ENCODE measurements at regions of chr9 and their contacts with region 1.

Region 1: GRCh38 chr9:136482793-136483588 is at the start of gene SEC16A:
- DNase-seq: peak; percentile 97
- ATAC-seq: peak; percentile 67
- H3K4me3 ChIP-seq: peak within 1 kb of the TSS; percentile 77 to 97
- H3K27ac ChIP-seq: peak within 1 kb of the TSS; percentile 100
- H3K4me1 ChIP-seq: peaks cover 10 to 29% of the 10 kb centered on the region in 2 experiments
- H3K27me3 ChIP-seq: no peaks in the 10 kb centered on the region
- CTCF ChIP-seq: no peak
- POLR2A ChIP-seq: no peak
- RAD21 ChIP-seq: no peak
- total RNA-seq, gene SEC16A: 49.8 TPM

Region 2: GRCh38 chr9:136539427-136540421 is 56.7 kb after region 1 on chr9:
- CTCF ChIA-PET with region 1: interaction called, 10 read pairs
- POLR2A ChIA-PET with region 1: no interaction called
- RAD21 ChIA-PET with region 1: no interaction called
- intact Hi-C with region 1: loop called (anchors 5 kb)
- DNase-seq: peak; percentile 89
- ATAC-seq: peak; percentile 85
- H3K4me3 ChIP-seq: 0 out of 4 replicates have a peak overlapping the region, but pooled peaks have one; percentile 1 to 7
- H3K27ac ChIP-seq: peak overlapping the region; percentile 75
- H3K4me1 ChIP-seq: peaks cover 32 to 43% of the 10 kb centered on the region in 2 experiments
- H3K27me3 ChIP-seq: no peaks in the 10 kb centered on the region
- CTCF ChIP-seq: no peak
- POLR2A ChIP-seq: no peak
- RAD21 ChIP-seq: no peak

Region 3: DNA sequence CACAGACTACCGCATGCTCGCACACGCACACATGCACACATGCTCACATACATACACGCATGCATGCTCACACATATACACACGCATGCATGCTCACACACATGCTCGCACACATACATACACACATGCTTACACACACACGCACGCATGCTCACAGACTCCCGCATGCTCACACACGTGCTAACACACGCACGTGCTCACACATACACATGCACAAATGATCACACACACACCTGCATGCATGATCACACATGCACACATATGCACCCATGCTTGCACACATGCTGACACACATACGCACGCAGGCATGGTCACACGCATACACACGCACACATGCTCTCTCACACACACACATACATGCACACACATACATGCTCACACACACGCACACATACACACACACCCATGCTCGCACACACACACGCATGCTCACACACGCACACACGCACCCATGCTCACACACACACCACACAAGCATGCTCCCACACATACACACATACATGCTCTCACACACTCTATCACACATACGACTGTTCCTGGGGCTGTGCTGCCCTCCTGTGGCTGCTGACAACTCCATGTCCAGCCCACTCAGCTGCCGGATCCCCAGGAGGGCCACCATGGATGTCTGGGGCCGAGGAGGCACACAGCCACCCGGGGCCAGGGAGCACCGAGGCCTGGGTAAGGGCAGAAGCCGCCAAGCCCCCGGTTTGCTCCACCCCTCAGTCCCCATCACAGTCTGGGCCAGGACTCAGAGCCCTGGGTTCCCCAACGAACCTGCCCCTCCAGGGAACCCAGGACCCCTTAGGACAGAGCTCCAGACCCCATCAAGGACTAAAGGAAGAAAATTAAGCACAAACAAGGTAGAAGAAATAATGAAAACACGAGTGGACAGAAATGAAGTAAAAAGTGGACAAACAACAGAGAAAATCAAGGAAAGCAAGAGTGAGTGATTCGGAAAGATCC is 148.3 kb after region 1 on chr9:
- CTCF ChIA-PET with region 1: interaction called, 108 read pairs
- POLR2A ChIA-PET with region 1: interaction called, 4 read pairs
- RAD21 ChIA-PET with region 1: interaction called, 6 to 9 read pairs
- intact Hi-C with region 1: loop called (anchors 1 kb)
- DNase-seq: peak; percentile 60
- ATAC-seq: peak; percentile 92
- H3K4me3 ChIP-seq: no peak overlapping the region
- H3K27ac ChIP-seq: no peak overlapping the region
- H3K4me1 ChIP-seq: peaks cover 0 to 3% of the 10 kb centered on the region in 2 experiments; a peak in 1 of 4 replicates
- H3K27me3 ChIP-seq: no peaks in the 10 kb centered on the region
- CTCF ChIP-seq: peak; percentile 81 to 85 (median 84); a peak in 5 of 6 replicates
- POLR2A ChIP-seq: no peak
- RAD21 ChIP-seq: peak; percentile 96

Region 4: GRCh38 chr9:136644598-136645351 is 161.8 kb after region 1 on chr9:
- CTCF ChIA-PET with region 1: interaction called, 4 read pairs
- POLR2A ChIA-PET with region 1: interaction called, 3 read pairs
- RAD21 ChIA-PET with region 1: no interaction called
- intact Hi-C with region 1: loop called (anchors 1 kb)
- DNase-seq: peak; percentile 42
- ATAC-seq: peak; percentile 99
- H3K4me3 ChIP-seq: peak overlapping the region in 1 of 2 experiments; percentile 31; a peak in 1 of 4 replicates
- H3K27ac ChIP-seq: peak overlapping the region; percentile 46; the same call in 1 of the 2 replicates
- H3K4me1 ChIP-seq: peaks cover 7 to 14% of the 10 kb centered on the region in 2 experiments
- H3K27me3 ChIP-seq: no peaks in the 10 kb centered on the region
- CTCF ChIP-seq: peak; percentile 74 to 97 (median 95)
- POLR2A ChIP-seq: no peak
- RAD21 ChIP-seq: peak; percentile 90

Region 5: DNA sequence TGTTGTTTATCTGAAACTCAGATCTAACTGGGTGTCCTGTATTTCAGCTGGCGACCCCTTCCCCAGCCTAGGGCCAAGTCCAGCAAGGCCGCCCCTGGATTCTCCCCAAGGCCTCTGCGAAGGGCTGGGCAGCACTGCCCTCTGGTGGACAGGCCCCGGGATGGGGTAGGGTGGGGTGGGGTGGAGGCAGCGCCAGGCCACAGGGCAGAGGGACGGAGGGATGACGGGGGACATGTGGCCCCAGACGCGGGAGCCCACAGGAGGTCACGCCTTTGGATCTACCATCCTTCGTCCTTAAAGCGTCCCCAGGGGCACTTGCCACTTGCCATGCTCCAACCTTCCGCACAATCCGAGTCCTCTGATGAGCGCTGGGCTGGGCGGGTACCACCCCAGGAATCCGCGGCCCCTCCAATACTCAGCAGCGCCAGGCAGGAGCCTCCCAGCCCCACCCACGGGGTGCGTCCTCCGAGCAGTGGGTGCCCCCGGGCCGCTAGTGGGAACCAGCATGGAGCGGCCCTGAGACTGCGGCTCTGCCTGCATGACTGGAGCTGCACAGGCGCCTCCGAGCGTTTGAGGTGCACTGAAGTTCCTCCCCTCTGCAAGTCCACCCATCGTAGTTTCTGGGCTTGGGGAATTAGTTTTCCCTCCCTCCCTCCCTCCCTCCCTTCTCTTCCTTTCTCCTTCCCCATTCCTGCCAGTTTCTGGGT is 211.4 kb after region 1 on chr9:
- CTCF ChIA-PET with region 1: interaction called, 11 read pairs
- POLR2A ChIA-PET with region 1: no interaction called
- RAD21 ChIA-PET with region 1: interaction called in 1 of 2 experiments, 3 read pairs
- intact Hi-C with region 1: loop called (anchors 2 kb)
- DNase-seq: peak; percentile 43
- ATAC-seq: peak; percentile 82
- H3K4me3 ChIP-seq: peak overlapping the region; percentile 31 to 58
- H3K27ac ChIP-seq: peak overlapping the region; percentile 92
- H3K4me1 ChIP-seq: peaks cover 50 to 77% of the 10 kb centered on the region in 2 experiments
- H3K27me3 ChIP-seq: no peaks in the 10 kb centered on the region
- CTCF ChIP-seq: peak in 2 of 3 experiments; percentile 86 to 87; a peak in 4 of 6 replicates
- POLR2A ChIP-seq: no peak
- RAD21 ChIP-seq: no peak

Region 6: DNA sequence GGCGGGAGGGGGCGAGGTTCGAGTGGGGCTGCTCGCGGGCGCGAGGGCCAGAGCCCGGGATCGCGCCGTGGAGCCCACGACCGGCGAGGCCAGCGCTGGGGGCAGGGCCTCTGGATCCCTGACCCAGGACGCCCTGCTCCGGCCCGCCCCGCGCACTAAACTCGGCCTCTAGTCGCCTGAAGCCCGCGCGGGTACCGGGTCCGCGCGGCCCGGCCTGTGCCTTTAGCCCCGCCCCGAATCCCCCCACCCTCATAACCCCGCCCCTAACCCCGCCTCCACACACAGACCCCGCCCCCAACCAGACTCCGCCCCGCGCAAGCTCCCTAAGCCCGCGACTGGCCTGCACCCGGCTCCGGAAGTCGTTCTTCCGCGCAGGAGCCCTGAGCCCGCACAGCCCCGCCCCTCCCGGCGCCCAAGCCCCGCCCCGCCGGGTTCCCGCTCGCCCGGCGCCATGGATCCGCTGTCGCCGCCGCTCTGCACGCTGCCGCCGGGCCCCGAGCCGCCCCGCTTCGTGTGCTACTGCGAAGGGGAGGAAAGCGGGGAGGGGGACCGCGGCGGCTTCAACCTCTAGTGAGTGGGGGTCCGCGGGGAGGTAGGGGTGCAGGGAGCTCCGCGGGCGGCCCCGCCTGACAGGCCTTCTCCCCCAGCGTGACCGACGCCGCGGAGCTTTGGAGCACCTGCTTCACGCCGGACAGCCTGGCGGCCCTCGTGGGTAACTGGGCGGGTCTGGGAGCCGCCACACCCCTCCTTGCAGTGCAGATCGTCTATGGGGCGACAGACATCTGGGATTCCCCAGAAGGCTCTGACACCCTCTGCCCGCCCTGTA is 509.2 kb after region 1 on chr9 and contains the start of gene PAXX:
- CTCF ChIA-PET with region 1: no interaction called
- POLR2A ChIA-PET with region 1: no interaction called
- RAD21 ChIA-PET with region 1: no interaction called
- intact Hi-C with region 1: no loop called
- DNase-seq: peak; percentile 81
- ATAC-seq: peak; percentile 75
- H3K4me3 ChIP-seq: peak within 1 kb of the TSS; percentile 88 to 99
- H3K27ac ChIP-seq: peak within 1 kb of the TSS; percentile 95
- H3K4me1 ChIP-seq: peaks cover 34 to 48% of the 10 kb centered on the region in 2 experiments
- H3K27me3 ChIP-seq: no peaks in the 10 kb centered on the region
- CTCF ChIP-seq: no peak
- POLR2A ChIP-seq: peak; percentile 19
- RAD21 ChIP-seq: no peak
- total RNA-seq, gene PAXX: 89.0 TPM

Region 7: GRCh38 chr9:137156567-137157375 is 673.8 kb after region 1 on chr9:
- CTCF ChIA-PET with region 1: no interaction called
- POLR2A ChIA-PET with region 1: no interaction called
- RAD21 ChIA-PET with region 1: no interaction called
- intact Hi-C with region 1: no loop called
- DNase-seq: no peak
- ATAC-seq: peak; percentile 60
- H3K4me3 ChIP-seq: no peak overlapping the region
- H3K27ac ChIP-seq: peak overlapping the region; percentile 42; the same call in 1 of the 2 replicates
- H3K4me1 ChIP-seq: peaks cover 3 to 31% of the 10 kb centered on the region in 2 experiments; a peak in 3 of 4 replicates
- H3K27me3 ChIP-seq: no peaks in the 10 kb centered on the region
- CTCF ChIP-seq: no peak
- POLR2A ChIP-seq: no peak
- RAD21 ChIP-seq: no peak

Measured in HCT116 (cell line).